Activated CD4-positive, alpha-beta T cell treated with anti-CD3 and anti-CD28 coated beads for 36 hours (primary cell): ENCODE measurements at regions of chr2 and their contacts with region 1.

Region 1: DNA sequence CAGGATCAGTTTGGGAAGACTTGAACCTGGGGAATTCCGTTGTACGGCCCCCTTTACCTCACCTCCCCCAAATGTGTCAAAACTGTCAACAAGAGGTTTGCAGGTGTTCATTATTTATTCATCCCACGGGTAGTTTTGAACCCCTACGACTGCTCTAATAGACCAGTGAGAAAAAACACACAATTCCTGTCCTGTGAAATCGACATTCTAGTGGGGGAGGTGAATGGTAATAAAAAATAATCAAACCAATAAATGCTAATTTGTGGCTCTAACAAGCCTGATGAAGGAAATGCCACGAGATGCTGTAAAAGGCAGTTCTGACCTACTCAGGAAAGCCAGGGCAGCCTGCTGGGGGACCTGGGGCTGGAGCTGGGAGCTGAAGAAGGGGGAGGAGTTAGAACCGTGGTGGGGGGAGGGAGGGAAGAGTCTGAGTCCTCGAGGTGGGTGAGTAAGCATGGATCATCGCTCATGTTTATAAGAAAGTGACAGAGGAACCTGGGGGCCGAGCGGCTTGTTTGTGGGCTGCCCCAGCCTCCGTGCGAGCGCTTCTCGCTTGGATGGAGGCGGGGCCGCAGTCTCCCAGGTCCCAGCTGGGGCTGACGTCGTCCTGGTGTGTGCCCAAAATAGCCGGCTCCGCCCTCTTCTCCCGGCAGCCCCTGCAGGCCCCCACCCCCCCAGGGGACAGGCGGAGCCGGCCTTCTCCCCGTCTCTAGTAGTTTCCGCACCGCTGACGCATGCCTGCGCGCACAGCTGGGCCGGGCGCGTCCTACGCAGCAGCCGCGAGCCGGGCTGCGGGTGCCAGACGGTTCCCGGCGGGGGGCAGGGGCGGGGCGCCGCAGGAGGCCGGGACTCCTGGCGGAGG is at the start of gene DNAJB2:
- DNase-seq: peak; percentile 100
- ATAC-seq: peak; percentile 86
- H3K4me3 Mint-ChIP-seq: peak within 1 kb of the TSS; percentile 96
- H3K27ac Mint-ChIP-seq: peak within 1 kb of the TSS; percentile 95
- H3K4me1 Mint-ChIP-seq: peaks cover 37% of the 10 kb centered on the region
- H3K27me3 Mint-ChIP-seq: no peaks in the 10 kb centered on the region
- total RNA-seq, gene DNAJB2: 51.8 to 62.8 TPM

Region 2: DNA sequence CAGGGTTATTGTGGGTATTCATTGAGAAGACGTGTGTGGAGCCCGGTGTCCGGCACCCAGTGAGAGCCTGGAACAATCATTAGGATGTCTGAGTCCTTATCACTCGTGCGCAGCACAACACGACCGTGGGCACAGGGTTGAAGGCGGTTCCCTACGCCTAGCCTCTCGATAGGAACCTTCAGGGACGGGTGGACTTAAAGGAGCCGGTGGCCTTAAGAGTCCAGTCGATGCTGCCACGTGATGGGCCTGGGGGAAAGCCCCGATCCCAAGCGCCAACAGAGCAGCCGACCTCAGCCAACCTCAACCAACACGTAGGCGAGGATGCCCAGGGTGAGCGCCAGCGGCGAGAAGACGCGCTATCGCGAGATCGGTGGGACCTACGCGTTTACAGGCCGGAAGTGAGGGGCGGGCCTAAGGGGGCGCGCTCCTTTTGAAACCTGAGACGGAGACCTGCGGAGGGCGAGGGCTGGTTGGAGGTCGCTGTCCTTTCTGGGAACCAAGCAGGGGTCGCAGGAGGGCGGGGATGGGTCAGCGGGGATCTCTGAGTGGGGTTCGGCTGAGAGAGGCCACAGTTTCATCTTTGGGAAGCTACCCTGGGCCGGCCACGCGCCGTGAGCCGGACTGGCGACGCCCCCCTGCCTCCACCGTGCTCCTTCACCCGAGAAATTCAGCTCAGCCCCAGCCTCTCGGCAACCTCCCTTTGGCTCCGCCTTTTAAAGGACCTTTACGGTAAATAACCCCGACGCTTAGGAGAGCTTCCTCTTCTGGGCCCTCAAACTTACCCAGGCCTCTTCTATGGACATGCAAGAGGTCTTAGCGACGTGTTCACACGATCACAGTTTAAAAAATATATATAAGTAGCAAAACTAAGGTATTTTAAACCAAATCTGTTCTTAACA is 369.9 kb before region 1 on chr2:
- CTCF ChIA-PET with region 1: no interaction called
- POLR2A ChIA-PET with region 1: no interaction called
- intact Hi-C with region 1: loop called in 1 of 2 experiments (anchors 1 kb)
- DNase-seq: peak; percentile 97
- ATAC-seq: peak; percentile 98
- H3K4me3 Mint-ChIP-seq: peak overlapping the region; percentile 85
- H3K27ac Mint-ChIP-seq: peak overlapping the region; percentile 83
- H3K4me1 Mint-ChIP-seq: peaks cover 13% of the 10 kb centered on the region
- H3K27me3 Mint-ChIP-seq: peaks cover 16% of the 10 kb centered on the region

Region 3: DNA sequence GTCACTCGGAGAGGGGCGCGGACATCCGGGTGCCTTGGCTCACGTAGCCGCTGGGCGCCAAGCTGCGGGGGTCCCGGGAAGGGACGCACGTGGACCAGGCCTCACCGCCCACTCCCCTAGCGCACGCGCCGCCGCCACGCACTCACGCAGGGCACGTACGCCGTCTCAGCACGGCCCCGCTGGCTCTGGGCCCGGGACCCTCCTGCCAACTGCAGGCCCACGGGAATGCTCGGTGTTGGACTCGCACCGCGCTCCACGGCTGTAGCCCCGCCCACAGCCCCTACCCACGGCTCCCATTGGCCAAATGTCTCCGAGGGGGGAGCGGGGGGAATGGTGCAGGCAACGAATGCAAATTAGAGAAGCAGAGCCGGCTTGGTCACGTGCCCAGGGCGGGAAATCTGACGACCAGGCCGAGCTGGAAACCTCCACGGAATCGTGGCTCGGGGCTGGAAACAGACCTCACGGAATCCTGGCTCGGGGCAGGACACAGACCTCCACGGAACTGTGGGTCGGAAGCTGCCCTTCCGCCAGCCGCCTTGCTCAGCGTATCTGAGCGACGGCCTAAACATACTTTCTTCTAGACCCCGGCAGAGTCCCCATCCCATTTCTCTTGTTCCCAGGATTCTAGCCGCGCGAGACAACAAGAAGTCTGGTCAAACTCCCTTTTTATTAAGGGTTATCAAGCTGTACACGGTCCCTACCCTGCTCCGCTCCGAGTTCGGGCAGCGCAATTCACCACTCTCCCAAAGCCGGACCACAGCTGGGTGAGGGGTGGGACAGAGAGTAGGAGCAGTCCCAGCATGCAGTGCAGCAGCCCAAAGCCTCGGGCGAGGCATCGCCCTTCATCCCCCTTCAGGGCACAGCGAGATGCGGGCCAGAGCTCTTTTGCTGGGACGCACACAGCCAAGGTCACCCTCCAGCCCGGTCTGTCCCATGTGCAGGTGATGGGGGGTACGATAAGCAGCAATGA is 59.9 kb before region 1 on chr2 and contains the start of gene ABCB6:
- CTCF ChIA-PET with region 1: interaction called, 5 read pairs
- POLR2A ChIA-PET with region 1: no interaction called
- intact Hi-C with region 1: loop called (anchors 1 to 2 kb)
- DNase-seq: peak; percentile 94
- ATAC-seq: peak; percentile 89
- H3K4me3 Mint-ChIP-seq: peak within 1 kb of the TSS; percentile 83
- H3K27ac Mint-ChIP-seq: peak within 1 kb of the TSS; percentile 74
- H3K4me1 Mint-ChIP-seq: peaks cover 24% of the 10 kb centered on the region
- H3K27me3 Mint-ChIP-seq: no peaks in the 10 kb centered on the region
- total RNA-seq, gene ABCB6: 18.2 to 21.9 TPM

Region 4: DNA sequence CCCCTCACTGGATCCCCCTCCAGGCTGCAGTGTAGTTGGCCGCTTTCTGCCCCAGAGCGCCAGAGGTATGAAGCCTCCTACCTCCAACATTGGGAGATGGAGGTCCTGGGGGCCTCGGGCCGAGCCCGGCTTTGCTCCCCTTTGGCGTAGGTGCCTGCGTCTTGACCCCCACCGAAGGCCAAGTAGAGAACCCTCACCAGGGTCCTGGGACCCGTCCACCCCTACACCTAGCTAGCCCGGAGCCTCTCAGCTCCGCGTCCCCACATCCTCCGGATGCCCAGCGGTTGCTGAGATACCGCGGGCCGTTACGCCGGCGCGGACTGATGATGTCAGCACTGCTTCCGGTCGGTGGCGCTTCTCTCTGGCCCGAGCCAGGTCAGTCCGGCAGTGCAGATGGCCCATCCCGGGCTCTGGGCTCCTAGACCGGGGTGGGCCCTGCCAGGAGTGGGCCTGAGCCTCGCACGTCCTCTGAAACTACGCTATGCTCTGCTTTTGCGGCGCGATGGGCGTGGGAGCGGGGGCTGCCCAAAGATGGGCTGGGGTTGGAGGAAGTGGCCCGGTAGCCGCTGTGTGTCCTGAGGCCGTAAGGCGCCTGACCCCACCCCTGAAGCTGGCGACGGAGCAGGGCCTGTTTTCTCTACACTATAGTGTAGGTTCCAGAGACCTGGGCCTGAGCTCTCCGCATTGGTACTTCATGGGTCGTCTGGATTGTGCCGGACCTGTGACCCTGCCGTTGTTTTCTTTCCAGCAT is 33.6 kb before region 1 on chr2 and contains the starts of genes GLB1L and STK16:
- CTCF ChIA-PET with region 1: interaction called, 27 read pairs
- POLR2A ChIA-PET with region 1: interaction called, 8 read pairs
- intact Hi-C with region 1: loop called in 1 of 2 experiments (anchors 1 kb)
- DNase-seq: peak; percentile 93
- ATAC-seq: peak; percentile 62
- H3K4me3 Mint-ChIP-seq: peak within 1 kb of the TSS; percentile 89
- H3K27ac Mint-ChIP-seq: peak within 1 kb of the TSS; percentile 100
- H3K4me1 Mint-ChIP-seq: peaks cover 59% of the 10 kb centered on the region
- H3K27me3 Mint-ChIP-seq: no peaks in the 10 kb centered on the region
- total RNA-seq, gene GLB1L: 2.7 to 4.2 TPM
- total RNA-seq, gene STK16: 34.3 to 35.4 TPM

Region 5: DNA sequence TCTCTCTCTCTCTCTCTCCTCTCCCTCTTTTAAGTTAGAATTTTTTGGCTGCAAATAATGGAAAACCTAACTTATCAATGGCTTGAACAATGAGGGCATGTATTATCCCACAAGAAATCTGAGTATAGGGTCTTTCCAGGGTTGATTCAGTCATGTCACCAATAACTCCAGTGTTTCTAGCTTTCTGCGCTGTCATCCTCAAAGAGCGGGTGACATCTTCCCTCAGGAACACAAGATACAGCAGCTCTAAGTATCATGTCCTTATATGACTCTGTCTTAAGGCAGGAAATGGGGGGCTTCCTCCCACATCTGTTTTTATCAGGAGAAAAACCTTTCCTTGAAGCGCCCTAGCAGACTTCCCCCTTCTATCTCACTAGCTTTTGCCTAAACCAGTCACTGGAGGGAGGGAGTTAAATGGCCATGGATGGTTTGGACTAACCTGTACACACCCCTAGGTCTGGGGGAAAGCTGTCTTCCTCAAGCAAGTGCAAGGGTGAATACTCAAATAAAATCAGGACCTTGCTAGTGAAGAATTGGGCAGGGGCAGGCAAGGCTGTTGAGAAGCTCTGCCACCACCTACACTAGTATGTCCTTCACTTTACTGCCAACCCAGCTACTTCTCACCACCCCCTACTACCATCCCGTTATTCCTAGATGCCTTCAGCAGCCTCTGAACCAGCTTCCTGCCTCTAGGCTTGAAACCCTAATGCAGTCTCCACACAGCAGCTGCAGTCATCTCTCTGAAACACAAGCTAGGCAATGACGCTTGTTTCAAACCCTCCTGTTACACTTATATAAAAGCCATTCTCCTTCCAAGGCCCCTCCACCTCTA is 17.6 kb before region 1 on chr2:
- CTCF ChIA-PET with region 1: interaction called, 68 read pairs
- POLR2A ChIA-PET with region 1: no interaction called
- intact Hi-C with region 1: no loop called
- DNase-seq: no peak
- ATAC-seq: no peak
- H3K4me3 Mint-ChIP-seq: no peak overlapping the region
- H3K27ac Mint-ChIP-seq: no peak overlapping the region
- H3K4me1 Mint-ChIP-seq: peaks cover 2% of the 10 kb centered on the region
- H3K27me3 Mint-ChIP-seq: peaks cover 2% of the 10 kb centered on the region